Heart left ventricle (tissue), 16 donors: ENCODE measurements at regions of chr6 and their contacts with region 1.

Region 1: DNA sequence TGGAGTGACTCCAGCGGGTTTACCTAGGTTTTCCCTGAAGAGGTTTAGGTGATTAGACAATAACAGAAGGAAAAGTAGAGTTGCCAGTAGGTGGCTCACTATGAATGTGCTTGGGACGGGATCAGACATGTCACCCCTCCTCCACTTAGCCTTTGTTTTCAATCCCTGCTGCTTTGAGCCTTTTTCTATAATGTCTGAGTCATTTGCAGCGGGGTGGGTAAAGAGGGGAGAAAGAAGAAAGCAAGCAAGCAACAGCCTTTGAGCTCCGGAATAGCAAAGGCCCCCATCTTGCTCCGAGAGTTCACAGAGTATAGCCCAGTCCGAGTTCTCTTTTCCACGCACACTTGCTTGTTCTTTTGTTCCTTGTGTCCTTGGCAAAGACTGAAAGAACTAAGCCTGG is 129.1 kb downstream of the PACRG start:
- DNase-seq: peak in 1 of 5 donors; percentile 40
- ATAC-seq: peak; percentile 74 to 92 (median 88)
- H3K4me3 ChIP-seq: peak overlapping the region in 9 of 12 donors; percentile 10 to 50 (median 35)
- H3K27ac ChIP-seq: peak overlapping the region in 11 of 12 donors; percentile 10 to 75 (median 56)
- H3K4me1 ChIP-seq: peaks cover 0 to 10% (median 0%) of the 10 kb centered on the region in 12 donors
- H3K27me3 ChIP-seq: no peaks in the 10 kb centered on the region
- CTCF ChIP-seq: peak; percentile 33 to 74 (median 56)
- POLR2A ChIP-seq: no peak

Region 2: GRCh38 chr6:163170294-163170883 is 313.5 kb after region 1 on chr6:
- intact Hi-C with region 1: loop called in 2 of 10 experiments (anchors 10 kb)
- DNase-seq: no peak
- ATAC-seq: no peak
- H3K4me3 ChIP-seq: no peak overlapping the region
- H3K27ac ChIP-seq: no peak overlapping the region
- H3K4me1 ChIP-seq: no peaks in the 10 kb centered on the region
- H3K27me3 ChIP-seq: no peaks in the 10 kb centered on the region
- CTCF ChIP-seq: peak; percentile 41 to 64 (median 52)
- POLR2A ChIP-seq: no peak

Region 3: DNA sequence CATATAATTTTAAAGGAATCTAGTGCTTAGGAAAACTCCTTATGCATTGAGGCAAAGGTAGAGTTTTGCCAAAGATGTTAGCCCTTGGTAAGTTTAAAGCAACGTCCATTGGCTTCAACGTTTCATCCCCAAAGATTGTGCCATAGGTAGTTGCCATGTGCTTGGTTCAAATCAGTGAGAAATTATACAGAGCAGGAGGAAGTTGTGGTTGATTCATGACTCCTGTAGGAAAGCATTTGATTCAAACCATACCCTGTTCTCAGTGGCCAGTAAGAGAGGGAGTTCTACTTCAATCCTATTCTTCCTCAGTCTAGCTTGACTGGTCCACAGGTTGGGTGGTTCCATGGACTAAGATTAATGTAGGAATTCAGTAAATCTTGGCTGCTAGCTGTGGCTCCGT is 1093.3 kb after region 1 on chr6:
- intact Hi-C with region 1: loop called in 2 of 10 experiments (anchors 5 kb)
- DNase-seq: no peak
- ATAC-seq: no peak
- H3K4me3 ChIP-seq: no peak overlapping the region
- H3K27ac ChIP-seq: no peak overlapping the region
- H3K4me1 ChIP-seq: peaks cover 0 to 8% (median under 1%) of the 10 kb centered on the region in 12 donors
- H3K27me3 ChIP-seq: no peaks in the 10 kb centered on the region
- CTCF ChIP-seq: no peak
- POLR2A ChIP-seq: no peak